Caco-2 (cell line): ENCODE measurements at regions of chr2 and their contacts with region 1.

Region 1: GRCh38 chr2:39513641-39514094 is 76.6 kb upstream of the MAP4K3 start:
- DNase-seq: peak in 1 of 2 experiments; percentile 61
- H3K4me3 ChIP-seq: no peak overlapping the region
- H3K4me3 Mint-ChIP-seq: no peak overlapping the region
- H3K27ac Mint-ChIP-seq: peak overlapping the region; percentile 12
- H3K4me1 ChIP-seq: peaks cover 43% of the 10 kb centered on the region
- H3K4me1 Mint-ChIP-seq: peaks cover 34% of the 10 kb centered on the region
- H3K27me3 ChIP-seq: no peaks in the 10 kb centered on the region
- H3K27me3 Mint-ChIP-seq: no peaks in the 10 kb centered on the region
- CTCF ChIP-seq: peak; percentile 43

Region 2: GRCh38 chr2:38734299-38735058 is 779.2 kb before region 1 on chr2:
- CTCF ChIA-PET with region 1: no interaction called
- POLR2A ChIA-PET with region 1: no interaction called
- intact Hi-C with region 1: no loop called
- DNase-seq: no peak
- H3K4me3 ChIP-seq: no peak overlapping the region
- H3K4me3 Mint-ChIP-seq: no peak overlapping the region
- H3K27ac Mint-ChIP-seq: no peak overlapping the region
- H3K4me1 ChIP-seq: no peaks in the 10 kb centered on the region
- H3K4me1 Mint-ChIP-seq: no peaks in the 10 kb centered on the region
- H3K27me3 ChIP-seq: no peaks in the 10 kb centered on the region
- H3K27me3 Mint-ChIP-seq: no peaks in the 10 kb centered on the region
- CTCF ChIP-seq: no peak

Region 3: DNA sequence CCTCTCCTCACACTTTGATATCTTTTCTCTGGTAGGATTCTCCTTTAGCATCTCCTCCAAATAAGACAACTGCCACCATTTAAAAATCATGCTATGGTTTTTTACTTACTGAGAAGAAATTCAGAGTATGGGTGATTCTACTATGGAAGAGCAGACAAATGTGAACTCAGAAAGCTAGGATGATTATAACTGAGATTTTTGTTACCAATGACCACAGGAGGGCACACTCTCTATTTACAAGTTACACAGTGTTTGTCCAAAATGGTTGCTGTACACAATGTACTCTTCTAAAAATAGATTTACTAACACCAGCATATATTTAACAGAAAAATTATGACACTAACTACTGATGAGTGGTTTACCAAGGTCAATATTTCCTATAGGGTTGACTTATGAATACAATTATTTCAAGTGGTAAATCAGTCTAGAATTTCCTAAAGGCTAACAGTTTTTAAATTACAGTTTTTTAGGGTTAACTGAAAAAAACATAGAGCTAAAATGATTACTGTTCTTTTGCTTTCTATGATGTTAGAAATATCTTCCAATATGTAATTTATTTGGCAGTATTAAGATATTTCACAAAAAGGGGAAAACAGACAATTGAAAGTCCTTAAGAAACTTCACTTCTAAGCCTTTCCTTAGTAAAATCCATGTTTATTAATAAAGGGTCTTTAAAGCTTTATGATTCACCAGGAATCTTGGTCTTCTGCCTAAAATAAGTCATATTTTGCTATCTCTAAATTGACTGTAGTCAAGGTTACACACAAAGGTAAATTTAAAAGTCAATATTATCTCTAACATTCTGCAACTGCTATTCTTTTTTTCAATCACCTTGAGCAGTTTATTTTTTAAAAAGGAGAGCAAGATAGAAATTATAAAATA is 133.8 kb before region 1 on chr2:
- CTCF ChIA-PET with region 1: no interaction called
- POLR2A ChIA-PET with region 1: no interaction called
- intact Hi-C with region 1: loop called (anchors 2 kb)
- DNase-seq: peak in 1 of 2 experiments; percentile 43
- H3K4me3 ChIP-seq: no peak overlapping the region
- H3K4me3 Mint-ChIP-seq: no peak overlapping the region
- H3K27ac Mint-ChIP-seq: no peak overlapping the region
- H3K4me1 ChIP-seq: 0 out of 2 replicates have a peak, but pooled peaks cover 4% of the 10 kb centered on the region
- H3K4me1 Mint-ChIP-seq: peaks cover 7% of the 10 kb centered on the region
- H3K27me3 ChIP-seq: no peaks in the 10 kb centered on the region
- H3K27me3 Mint-ChIP-seq: no peaks in the 10 kb centered on the region
- CTCF ChIP-seq: peak; percentile 57 to 74

Region 4: GRCh38 chr2:39530411-39530866 is 16.8 kb after region 1 on chr2:
- CTCF ChIA-PET with region 1: no interaction called
- POLR2A ChIA-PET with region 1: no interaction called
- intact Hi-C with region 1: loop called (anchors 2 kb)
- DNase-seq: no peak
- H3K4me3 ChIP-seq: no peak overlapping the region
- H3K4me3 Mint-ChIP-seq: no peak overlapping the region
- H3K27ac Mint-ChIP-seq: no peak overlapping the region
- H3K4me1 ChIP-seq: no peaks in the 10 kb centered on the region
- H3K4me1 Mint-ChIP-seq: peaks cover 7% of the 10 kb centered on the region
- H3K27me3 ChIP-seq: no peaks in the 10 kb centered on the region
- H3K27me3 Mint-ChIP-seq: no peaks in the 10 kb centered on the region
- CTCF ChIP-seq: no peak

Region 5: GRCh38 chr2:39593439-39594393 is 80.0 kb after region 1 on chr2:
- CTCF ChIA-PET with region 1: no interaction called
- POLR2A ChIA-PET with region 1: no interaction called
- intact Hi-C with region 1: loop called (anchors 5 kb)
- DNase-seq: peak; percentile 53 to 65
- H3K4me3 ChIP-seq: no peak overlapping the region
- H3K4me3 Mint-ChIP-seq: no peak overlapping the region
- H3K27ac Mint-ChIP-seq: no peak overlapping the region
- H3K4me1 ChIP-seq: no peaks in the 10 kb centered on the region
- H3K4me1 Mint-ChIP-seq: no peaks in the 10 kb centered on the region
- H3K27me3 ChIP-seq: no peaks in the 10 kb centered on the region
- H3K27me3 Mint-ChIP-seq: no peaks in the 10 kb centered on the region
- CTCF ChIP-seq: peak; percentile 54 to 73

Region 6: DNA sequence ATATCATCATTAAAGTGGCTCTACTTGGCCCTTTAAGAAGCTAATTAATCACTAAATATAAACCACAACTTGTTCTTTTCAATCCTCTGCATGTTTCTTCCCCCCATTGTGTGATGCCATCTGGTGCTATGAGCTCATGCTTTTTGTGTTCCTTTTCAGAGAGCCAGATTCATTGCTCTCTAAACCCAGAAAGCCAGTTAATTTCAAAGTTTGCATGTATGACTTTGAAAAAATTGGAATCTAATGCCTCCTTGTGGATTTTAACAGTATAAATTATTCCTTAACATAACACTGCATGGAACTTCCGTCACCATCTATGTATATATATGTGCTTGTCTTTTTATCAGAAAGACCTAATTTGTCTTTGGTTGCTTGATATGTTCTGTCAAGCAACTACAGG is 183.2 kb after region 1 on chr2:
- CTCF ChIA-PET with region 1: interaction called, 3 read pairs
- POLR2A ChIA-PET with region 1: no interaction called
- intact Hi-C with region 1: loop called (anchors 10 kb)
- DNase-seq: no peak
- H3K4me3 ChIP-seq: no peak overlapping the region
- H3K4me3 Mint-ChIP-seq: no peak overlapping the region
- H3K27ac Mint-ChIP-seq: no peak overlapping the region
- H3K4me1 ChIP-seq: no peaks in the 10 kb centered on the region
- H3K4me1 Mint-ChIP-seq: no peaks in the 10 kb centered on the region
- H3K27me3 ChIP-seq: no peaks in the 10 kb centered on the region; the same call in 1 of the 2 replicates
- H3K27me3 Mint-ChIP-seq: peaks cover 14% of the 10 kb centered on the region
- CTCF ChIP-seq: no peak

Region 7: GRCh38 chr2:39728941-39729351 is 215.3 kb after region 1 on chr2:
- CTCF ChIA-PET with region 1: interaction called, 3 read pairs
- POLR2A ChIA-PET with region 1: no interaction called
- intact Hi-C with region 1: loop called (anchors 1 kb)
- DNase-seq: peak in 1 of 2 experiments; percentile 45
- H3K4me3 ChIP-seq: no peak overlapping the region
- H3K4me3 Mint-ChIP-seq: no peak overlapping the region
- H3K27ac Mint-ChIP-seq: no peak overlapping the region
- H3K4me1 ChIP-seq: peaks cover 26% of the 10 kb centered on the region
- H3K4me1 Mint-ChIP-seq: peaks cover 20% of the 10 kb centered on the region
- H3K27me3 ChIP-seq: no peaks in the 10 kb centered on the region
- H3K27me3 Mint-ChIP-seq: no peaks in the 10 kb centered on the region
- CTCF ChIP-seq: peak; percentile 75 to 86